ENCODE measurements at regions of chr11 and their contacts with region 1.

Region 1: GRCh38 chr11:128701936-128702335 is 8.1 kb downstream of the FLI1 start:
- DNase-seq: no peak
- H3K4me3 ChIP-seq: no peak overlapping the region
- H3K4me3 Mint-ChIP-seq: peak overlapping the region in 4 of 7 donors; percentile 1 to 63 (median 23)
- H3K27ac ChIP-seq: no peak overlapping the region
- H3K27ac Mint-ChIP-seq: peak overlapping the region in 7 of 8 donors; percentile 20 to 84 (median 65)
- H3K4me1 ChIP-seq: peaks cover 100% of the 10 kb centered on the region
- H3K4me1 Mint-ChIP-seq: peaks cover 93 to 100% (median 99%) of the 10 kb centered on the region in 3 donors
- H3K27me3 ChIP-seq: no peaks in the 10 kb centered on the region
- H3K27me3 Mint-ChIP-seq: no peaks in the 10 kb centered on the region

Region 2: DNA sequence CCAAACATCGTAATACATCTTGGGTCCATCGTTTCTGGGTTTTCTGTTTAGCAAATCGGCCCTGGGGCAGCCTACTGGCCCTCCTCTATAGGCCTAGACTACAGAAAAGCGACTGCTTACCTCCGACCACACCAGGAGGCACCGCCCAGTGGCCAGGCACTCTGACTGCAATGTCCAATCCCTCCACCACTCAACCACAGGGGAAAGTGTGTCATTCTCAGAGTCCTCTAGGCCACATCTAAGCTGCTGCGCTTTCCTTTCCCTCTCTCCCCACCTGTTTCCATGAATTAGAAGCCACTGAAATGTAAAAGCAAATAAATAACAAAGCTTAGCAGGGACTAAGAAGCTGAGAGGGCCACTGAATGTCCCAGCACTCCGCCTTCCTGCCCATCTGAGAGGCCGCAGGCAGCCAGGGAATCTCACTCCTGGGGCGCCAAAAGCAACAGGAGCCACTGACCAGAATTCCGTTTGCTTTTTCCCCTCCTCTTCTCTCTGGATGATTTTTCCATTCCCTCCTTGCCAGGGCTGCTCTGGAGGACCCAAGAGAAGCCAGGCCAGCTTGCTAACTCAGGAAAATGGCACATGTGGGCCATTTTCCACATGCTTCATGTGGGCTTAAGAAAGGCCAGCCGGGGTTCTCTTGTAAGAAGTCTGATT is 58.1 kb before region 1 on chr11:
- CTCF ChIA-PET with region 1: no interaction called
- POLR2A ChIA-PET with region 1: no interaction called
- DNase-seq: no peak
- H3K4me3 ChIP-seq: no peak overlapping the region
- H3K4me3 Mint-ChIP-seq: no peak overlapping the region
- H3K27ac ChIP-seq: no peak overlapping the region
- H3K27ac Mint-ChIP-seq: no peak overlapping the region
- H3K4me1 ChIP-seq: no peaks in the 10 kb centered on the region
- H3K4me1 Mint-ChIP-seq: peaks cover 2 to 7% (median 5%) of the 10 kb centered on the region in 3 donors
- H3K27me3 ChIP-seq: no peaks in the 10 kb centered on the region
- H3K27me3 Mint-ChIP-seq: no peaks in the 10 kb centered on the region

Region 3: DNA sequence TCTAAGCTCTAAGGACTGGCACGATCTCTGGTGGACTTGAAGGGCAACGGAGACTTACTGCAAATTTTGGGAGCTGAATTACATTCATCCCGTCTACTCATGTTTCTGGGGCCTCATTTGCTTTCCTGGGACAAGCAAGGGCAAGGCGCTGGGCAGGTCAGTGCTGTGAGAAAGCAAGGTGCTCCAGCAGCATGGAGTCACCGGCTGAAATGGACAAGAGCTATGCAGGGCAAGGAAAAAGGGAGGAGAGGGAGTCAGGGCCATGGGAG is 17.6 kb after region 1 on chr11:
- CTCF ChIA-PET with region 1: interaction called, 7 read pairs
- POLR2A ChIA-PET with region 1: interaction called, 11 read pairs
- DNase-seq: no peak
- H3K4me3 ChIP-seq: peak overlapping the region; percentile 48
- H3K4me3 Mint-ChIP-seq: peak overlapping the region; percentile 65 to 89 (median 82)
- H3K27ac ChIP-seq: no peak overlapping the region
- H3K27ac Mint-ChIP-seq: peak overlapping the region; percentile 94 to 100 (median 98)
- H3K4me1 ChIP-seq: peaks cover 99% of the 10 kb centered on the region
- H3K4me1 Mint-ChIP-seq: peaks cover 99 to 100% (median 100%) of the 10 kb centered on the region in 3 donors
- H3K27me3 ChIP-seq: no peaks in the 10 kb centered on the region
- H3K27me3 Mint-ChIP-seq: peaks cover 0 to 2% of the 10 kb centered on the region in 2 donors

Measured in CD8-positive, alpha-beta memory T cell (primary cell).